ENCODE measurements at regions of chr12 and their contacts with region 1.

Region 1: DNA sequence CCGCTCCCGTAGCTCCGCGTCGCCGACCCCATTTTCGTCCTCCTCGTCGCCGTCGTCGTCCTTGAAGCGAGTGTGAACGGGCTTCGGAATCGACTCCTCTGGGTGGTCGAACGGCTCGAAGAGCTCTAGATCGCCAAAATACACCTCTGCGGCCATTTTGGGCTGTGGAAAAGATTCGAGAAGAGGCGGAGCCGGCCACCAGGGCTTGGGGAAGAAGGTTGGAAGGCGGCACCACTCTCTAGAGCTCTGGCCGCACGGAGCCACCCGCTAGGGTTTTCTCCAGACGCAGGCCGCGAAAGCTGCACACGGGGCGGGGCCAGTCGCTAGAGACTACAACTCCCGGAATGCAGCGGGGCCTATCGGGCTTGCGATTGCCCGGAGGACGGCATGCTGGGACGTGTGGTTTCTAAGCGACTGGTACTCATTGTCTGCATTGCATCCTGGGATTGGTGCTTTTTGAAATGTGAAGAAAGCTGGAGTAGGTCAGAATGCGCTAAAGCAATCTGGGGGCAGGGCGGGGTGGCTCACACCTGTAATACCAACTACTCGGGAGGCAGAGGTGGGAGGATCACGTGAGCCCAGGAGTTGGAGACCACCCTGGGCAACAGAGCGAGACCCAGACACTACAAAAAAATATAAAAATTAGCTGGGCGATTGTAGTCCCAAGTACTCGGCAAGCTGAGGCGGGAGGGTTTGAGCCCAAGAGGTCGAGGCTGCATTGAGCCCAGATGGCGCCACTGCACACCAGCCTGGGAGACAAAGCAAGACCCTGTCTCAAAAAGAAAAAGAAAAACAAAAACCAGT is at the start of gene ZCCHC8:
- DNase-seq: peak; percentile 98
- H3K4me3 Mint-ChIP-seq: peak within 1 kb of the TSS; percentile 99
- H3K27ac Mint-ChIP-seq: peak within 1 kb of the TSS; percentile 97
- H3K4me1 Mint-ChIP-seq: peaks cover 41% of the 10 kb centered on the region
- H3K27me3 Mint-ChIP-seq: no peaks in the 10 kb centered on the region
- total RNA-seq, gene ZCCHC8: 44.4 to 46.6 TPM

Region 2: GRCh38 chr12:122182887-122183585 is 317.9 kb before region 1 on chr12 and contains the start of gene LRRC43:
- CTCF ChIA-PET with region 1: no interaction called
- POLR2A ChIA-PET with region 1: no interaction called
- DNase-seq: peak; percentile 46
- H3K4me3 Mint-ChIP-seq: peak within 1 kb of the TSS; percentile 62
- H3K27ac Mint-ChIP-seq: no peak within 1 kb of the TSS
- H3K4me1 Mint-ChIP-seq: peaks cover 8% of the 10 kb centered on the region
- H3K27me3 Mint-ChIP-seq: peaks cover 31% of the 10 kb centered on the region
- total RNA-seq, gene LRRC43: 0.38 TPM in 1 of 2 experiments, not detected in the other

Region 3: DNA sequence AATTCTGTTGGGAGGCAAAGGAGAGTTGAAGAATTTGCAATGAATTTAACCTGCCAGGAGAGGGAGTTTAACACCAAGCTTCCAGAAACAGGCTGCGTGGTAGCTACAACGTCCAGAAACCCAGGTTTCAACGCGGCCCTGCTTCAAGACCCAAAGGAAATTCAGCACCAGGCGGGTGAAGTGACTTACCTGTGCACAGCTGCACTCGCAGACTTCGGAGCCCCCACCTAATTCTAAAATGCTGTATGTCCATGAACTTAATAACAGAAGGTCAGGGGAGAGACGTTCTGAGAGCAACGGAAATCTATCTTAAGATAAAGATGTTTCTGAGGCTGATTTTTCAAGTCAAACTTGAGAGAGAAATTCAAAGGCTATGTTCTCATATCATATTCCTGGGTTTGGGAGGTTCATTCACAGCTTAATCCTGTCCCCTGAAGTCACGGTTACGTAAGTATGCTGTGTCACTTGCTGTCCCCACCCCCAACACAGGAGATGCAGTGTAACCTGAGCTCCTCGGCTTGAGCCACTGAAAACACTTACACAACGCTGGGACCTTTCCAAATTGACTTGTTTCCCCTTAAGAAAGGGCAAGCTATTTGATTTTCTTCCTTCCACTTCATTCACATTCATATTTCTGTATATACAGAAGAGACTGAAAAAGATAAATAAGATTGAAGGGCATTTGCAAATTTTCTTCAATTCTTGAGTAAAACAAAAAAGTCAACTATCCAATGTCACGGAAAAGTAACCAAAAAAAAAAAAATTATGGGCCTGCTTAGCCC is 101.1 kb before region 1 on chr12:
- CTCF ChIA-PET with region 1: interaction called, 37 read pairs
- POLR2A ChIA-PET with region 1: interaction called, 27 read pairs
- DNase-seq: peak; percentile 59
- H3K4me3 Mint-ChIP-seq: peak overlapping the region; percentile 34
- H3K27ac Mint-ChIP-seq: peak overlapping the region; percentile 71
- H3K4me1 Mint-ChIP-seq: peaks cover 40% of the 10 kb centered on the region
- H3K27me3 Mint-ChIP-seq: no peaks in the 10 kb centered on the region

Region 4: GRCh38 chr12:122421821-122422729 is 78.8 kb before region 1 on chr12 and contains the start of gene CLIP1:
- CTCF ChIA-PET with region 1: interaction called, 4 read pairs
- POLR2A ChIA-PET with region 1: interaction called, 31 read pairs
- DNase-seq: peak; percentile 68
- H3K4me3 Mint-ChIP-seq: peak within 1 kb of the TSS; percentile 91
- H3K27ac Mint-ChIP-seq: peak within 1 kb of the TSS; percentile 87
- H3K4me1 Mint-ChIP-seq: peaks cover 42% of the 10 kb centered on the region
- H3K27me3 Mint-ChIP-seq: peaks cover 2% of the 10 kb centered on the region
- total RNA-seq, gene CLIP1: 65.3 to 73.4 TPM

Region 5: GRCh38 chr12:122471324-122472226 is 29.3 kb before region 1 on chr12:
- CTCF ChIA-PET with region 1: interaction called, 11 read pairs
- POLR2A ChIA-PET with region 1: interaction called, 3 read pairs
- DNase-seq: no peak
- H3K4me3 Mint-ChIP-seq: no peak overlapping the region
- H3K27ac Mint-ChIP-seq: no peak overlapping the region
- H3K4me1 Mint-ChIP-seq: peaks cover 23% of the 10 kb centered on the region
- H3K27me3 Mint-ChIP-seq: no peaks in the 10 kb centered on the region

Region 6: DNA sequence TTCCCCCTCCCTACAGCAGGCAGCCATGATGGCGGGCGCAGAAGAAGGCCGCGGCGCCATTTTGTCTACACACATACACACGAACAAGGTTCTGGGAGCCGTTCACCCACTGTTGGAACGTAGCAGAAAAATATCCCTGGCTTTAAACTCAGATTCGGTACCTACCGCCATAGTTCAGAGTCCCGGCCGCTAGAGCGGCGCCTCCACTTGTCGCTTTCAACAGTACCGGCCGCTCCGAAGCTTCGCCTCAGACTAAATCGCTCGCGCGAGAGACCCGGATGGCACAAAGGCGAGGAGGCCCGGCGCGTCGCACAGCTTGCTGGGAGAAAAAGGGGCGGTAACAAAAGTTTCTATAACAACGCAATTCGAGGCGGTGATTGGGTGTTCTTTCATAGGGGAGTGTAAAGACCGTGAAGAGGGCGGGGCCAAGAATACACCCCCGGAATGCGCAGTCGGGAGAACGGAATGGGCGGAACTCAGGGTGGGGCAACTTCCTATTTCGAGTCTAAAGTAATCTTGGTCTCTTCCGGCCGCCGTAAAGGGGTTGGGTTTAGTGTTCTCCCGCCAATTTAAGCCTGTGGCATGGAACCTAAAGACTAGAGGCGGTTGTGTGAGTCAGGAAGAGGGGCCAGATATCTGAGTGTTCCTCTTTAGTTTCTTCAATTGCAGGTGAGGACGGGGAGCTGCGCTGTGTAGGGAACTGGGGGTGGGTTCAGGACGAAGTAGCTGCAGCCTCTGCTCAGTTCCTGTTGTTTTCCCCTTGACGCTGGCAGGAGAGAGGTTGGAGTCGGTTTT is 26.0 kb after region 1 on chr12 and contains the starts of genes KNTC1 and RSRC2:
- CTCF ChIA-PET with region 1: interaction called, 25 read pairs
- POLR2A ChIA-PET with region 1: interaction called, 542 read pairs
- DNase-seq: peak; percentile 99
- H3K4me3 Mint-ChIP-seq: no peak within 1 kb of the TSS
- H3K27ac Mint-ChIP-seq: no peak within 1 kb of the TSS
- H3K4me1 Mint-ChIP-seq: peaks cover 44% of the 10 kb centered on the region
- H3K27me3 Mint-ChIP-seq: no peaks in the 10 kb centered on the region
- total RNA-seq, gene KNTC1: 101 to 103 TPM
- total RNA-seq, gene RSRC2: 90.7 to 97.4 TPM

Region 7: GRCh38 chr12:122614839-122615238 is 114.0 kb after region 1 on chr12:
- CTCF ChIA-PET with region 1: no interaction called
- POLR2A ChIA-PET with region 1: no interaction called
- DNase-seq: no peak
- H3K4me3 Mint-ChIP-seq: no peak overlapping the region
- H3K27ac Mint-ChIP-seq: no peak overlapping the region
- H3K4me1 Mint-ChIP-seq: no peaks in the 10 kb centered on the region
- H3K27me3 Mint-ChIP-seq: no peaks in the 10 kb centered on the region

Region 8: GRCh38 chr12:122995503-122996187 is 494.8 kb after region 1 on chr12:
- CTCF ChIA-PET with region 1: no interaction called
- POLR2A ChIA-PET with region 1: no interaction called
- DNase-seq: no peak
- H3K4me3 Mint-ChIP-seq: no peak overlapping the region
- H3K27ac Mint-ChIP-seq: no peak overlapping the region
- H3K4me1 Mint-ChIP-seq: peaks cover 5% of the 10 kb centered on the region
- H3K27me3 Mint-ChIP-seq: no peaks in the 10 kb centered on the region

Region 9: GRCh38 chr12:123126186-123127006 is 625.5 kb after region 1 on chr12:
- CTCF ChIA-PET with region 1: no interaction called
- POLR2A ChIA-PET with region 1: no interaction called
- DNase-seq: no peak
- H3K4me3 Mint-ChIP-seq: no peak overlapping the region
- H3K27ac Mint-ChIP-seq: no peak overlapping the region
- H3K4me1 Mint-ChIP-seq: peaks cover 20% of the 10 kb centered on the region
- H3K27me3 Mint-ChIP-seq: peaks cover 6% of the 10 kb centered on the region